Activated CD8-positive, alpha-beta T cell treated with anti-CD3 and anti-CD28 coated beads for 36 hours (primary cell): ENCODE measurements at regions of chr6 and their contacts with region 1.

Region 1: GRCh38 chr6:106360410-106360988 is at the start of gene CRYBG1:
- DNase-seq: peak; percentile 73
- ATAC-seq: peak; percentile 92
- H3K4me3 Mint-ChIP-seq: peak within 1 kb of the TSS; percentile 68
- H3K27ac Mint-ChIP-seq: no peak within 1 kb of the TSS
- H3K4me1 Mint-ChIP-seq: peaks cover 10% of the 10 kb centered on the region
- H3K27me3 Mint-ChIP-seq: peaks cover 46% of the 10 kb centered on the region
- CTCF ChIP-seq: peak; percentile 99
- total RNA-seq, gene CRYBG1: 20.8 to 21.1 TPM

Region 2: GRCh38 chr6:106372838-106373501 is 12.5 kb after region 1 on chr6:
- CTCF ChIA-PET with region 1: interaction called, 28 read pairs
- POLR2A ChIA-PET with region 1: no interaction called
- intact Hi-C with region 1: no loop called
- DNase-seq: no peak
- ATAC-seq: peak; percentile 86
- H3K4me3 Mint-ChIP-seq: no peak overlapping the region
- H3K27ac Mint-ChIP-seq: peak overlapping the region; percentile 78
- H3K4me1 Mint-ChIP-seq: peaks cover 17% of the 10 kb centered on the region
- H3K27me3 Mint-ChIP-seq: peaks cover 13% of the 10 kb centered on the region
- CTCF ChIP-seq: no peak

Region 3: DNA sequence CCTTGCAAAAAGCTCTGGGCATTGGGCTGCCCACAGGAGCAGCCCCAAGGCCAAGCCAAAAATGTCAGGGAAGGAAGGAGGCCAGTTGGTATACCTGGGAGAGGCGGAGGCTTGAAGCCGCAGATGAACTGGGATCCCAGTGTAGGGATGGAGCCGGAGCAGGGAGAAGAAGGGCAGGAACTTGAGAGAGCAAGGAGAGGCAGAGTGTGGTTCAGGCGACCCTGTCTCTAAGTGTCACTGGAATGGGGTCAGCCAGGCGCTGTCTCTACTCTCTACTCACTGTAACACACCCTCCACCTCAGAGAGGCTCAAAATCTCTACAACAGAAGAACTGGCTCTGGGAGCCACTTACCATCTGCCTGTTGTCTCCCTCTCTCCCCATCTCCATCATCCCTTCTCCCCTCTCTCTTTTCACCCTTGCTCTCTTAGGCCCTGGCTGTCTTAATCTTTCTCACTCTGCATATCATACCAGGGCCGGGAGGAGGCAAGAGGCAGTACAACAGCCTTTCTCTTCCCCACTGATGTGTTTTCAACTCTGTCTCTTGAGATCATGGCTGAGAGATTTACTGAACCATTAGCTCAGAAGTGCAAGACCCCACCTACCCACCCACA is 93.4 kb after region 1 on chr6:
- CTCF ChIA-PET with region 1: no interaction called
- POLR2A ChIA-PET with region 1: no interaction called
- intact Hi-C with region 1: no loop called
- DNase-seq: no peak
- ATAC-seq: no peak
- H3K4me3 Mint-ChIP-seq: no peak overlapping the region
- H3K27ac Mint-ChIP-seq: no peak overlapping the region
- H3K4me1 Mint-ChIP-seq: no peaks in the 10 kb centered on the region
- H3K27me3 Mint-ChIP-seq: no peaks in the 10 kb centered on the region
- CTCF ChIP-seq: no peak

Region 4: GRCh38 chr6:106626485-106626884 is 266.0 kb after region 1 on chr6:
- CTCF ChIA-PET with region 1: no interaction called
- POLR2A ChIA-PET with region 1: no interaction called
- intact Hi-C with region 1: no loop called
- DNase-seq: no peak
- ATAC-seq: no peak
- H3K4me3 Mint-ChIP-seq: no peak overlapping the region
- H3K27ac Mint-ChIP-seq: no peak overlapping the region
- H3K4me1 Mint-ChIP-seq: peaks cover 21% of the 10 kb centered on the region
- H3K27me3 Mint-ChIP-seq: no peaks in the 10 kb centered on the region
- CTCF ChIP-seq: no peak